GM23248 (cell line): ENCODE measurements at regions of chr2 and their contacts with region 1.

Region 1: DNA sequence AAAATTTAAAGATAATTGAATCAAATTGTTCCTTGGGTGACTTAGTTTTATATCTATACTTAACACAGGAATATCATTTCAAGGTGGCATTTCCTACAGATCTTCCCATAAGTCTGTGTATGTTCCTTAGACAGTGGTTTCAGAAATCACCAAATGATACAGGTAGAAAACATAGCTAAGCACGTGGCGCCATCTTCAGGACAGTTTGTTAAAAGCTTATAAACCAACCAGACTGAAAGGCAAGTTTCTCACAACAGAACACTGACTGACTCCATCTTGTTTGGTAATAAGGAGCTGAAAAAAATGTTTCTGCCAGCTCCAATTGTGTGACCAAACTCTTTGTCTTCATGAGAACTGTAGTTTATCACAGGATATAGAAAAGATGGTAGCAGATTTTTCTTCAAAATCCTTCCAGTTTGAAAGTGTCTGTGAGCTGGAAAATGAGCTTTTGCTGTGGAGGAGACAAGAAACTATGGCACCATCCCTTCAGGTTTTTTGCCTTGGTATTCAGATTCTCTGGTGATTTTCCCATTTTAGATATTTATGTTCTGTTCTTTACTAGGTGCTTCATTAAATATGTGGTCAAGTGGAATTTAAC is 34.8 kb upstream of the NEUROD1 start:
- DNase-seq: peak; percentile 84
- H3K4me3 ChIP-seq: no peak overlapping the region
- H3K27ac ChIP-seq: no peak overlapping the region
- H3K4me1 ChIP-seq: no peaks in the 10 kb centered on the region
- H3K27me3 ChIP-seq: no peaks in the 10 kb centered on the region

Region 2: GRCh38 chr2:180115675-180116074 is 1599.5 kb before region 1 on chr2:
- in situ Hi-C with region 1: loop called (anchors 10 kb)
- DNase-seq: no peak
- H3K4me3 ChIP-seq: no peak overlapping the region
- H3K27ac ChIP-seq: no peak overlapping the region
- H3K4me1 ChIP-seq: no peaks in the 10 kb centered on the region
- H3K27me3 ChIP-seq: no peaks in the 10 kb centered on the region

Region 3: GRCh38 chr2:181077128-181077709 is 637.9 kb before region 1 on chr2:
- in situ Hi-C with region 1: loop called (anchors 25 kb)
- DNase-seq: peak; percentile 64
- H3K4me3 ChIP-seq: no peak overlapping the region
- H3K27ac ChIP-seq: no peak overlapping the region
- H3K4me1 ChIP-seq: peaks cover 22% of the 10 kb centered on the region
- H3K27me3 ChIP-seq: no peaks in the 10 kb centered on the region

Region 4: GRCh38 chr2:181354626-181355025 is 360.5 kb before region 1 on chr2:
- in situ Hi-C with region 1: no loop called
- DNase-seq: peak; percentile 91
- H3K4me3 ChIP-seq: no peak overlapping the region
- H3K27ac ChIP-seq: 0 out of 2 replicates have a peak overlapping the region, but pooled peaks have one; percentile 38
- H3K4me1 ChIP-seq: peaks cover 31% of the 10 kb centered on the region
- H3K27me3 ChIP-seq: no peaks in the 10 kb centered on the region

Region 5: GRCh38 chr2:181573140-181573736 is 141.9 kb before region 1 on chr2:
- in situ Hi-C with region 1: loop called (anchors 10 kb)
- DNase-seq: peak; percentile 58
- H3K4me3 ChIP-seq: no peak overlapping the region
- H3K27ac ChIP-seq: no peak overlapping the region
- H3K4me1 ChIP-seq: no peaks in the 10 kb centered on the region
- H3K27me3 ChIP-seq: no peaks in the 10 kb centered on the region; the same call in 1 of the 2 replicates